GM10248 (cell line): ENCODE measurements at regions of chr15 and their contacts with region 1.

Region 1: GRCh38 chr15:77633134-77633912 is 611 bp upstream of the LINGO1 start:
- DNase-seq: peak; percentile 93
- CTCF ChIP-seq: peak; percentile 100

Region 2: DNA sequence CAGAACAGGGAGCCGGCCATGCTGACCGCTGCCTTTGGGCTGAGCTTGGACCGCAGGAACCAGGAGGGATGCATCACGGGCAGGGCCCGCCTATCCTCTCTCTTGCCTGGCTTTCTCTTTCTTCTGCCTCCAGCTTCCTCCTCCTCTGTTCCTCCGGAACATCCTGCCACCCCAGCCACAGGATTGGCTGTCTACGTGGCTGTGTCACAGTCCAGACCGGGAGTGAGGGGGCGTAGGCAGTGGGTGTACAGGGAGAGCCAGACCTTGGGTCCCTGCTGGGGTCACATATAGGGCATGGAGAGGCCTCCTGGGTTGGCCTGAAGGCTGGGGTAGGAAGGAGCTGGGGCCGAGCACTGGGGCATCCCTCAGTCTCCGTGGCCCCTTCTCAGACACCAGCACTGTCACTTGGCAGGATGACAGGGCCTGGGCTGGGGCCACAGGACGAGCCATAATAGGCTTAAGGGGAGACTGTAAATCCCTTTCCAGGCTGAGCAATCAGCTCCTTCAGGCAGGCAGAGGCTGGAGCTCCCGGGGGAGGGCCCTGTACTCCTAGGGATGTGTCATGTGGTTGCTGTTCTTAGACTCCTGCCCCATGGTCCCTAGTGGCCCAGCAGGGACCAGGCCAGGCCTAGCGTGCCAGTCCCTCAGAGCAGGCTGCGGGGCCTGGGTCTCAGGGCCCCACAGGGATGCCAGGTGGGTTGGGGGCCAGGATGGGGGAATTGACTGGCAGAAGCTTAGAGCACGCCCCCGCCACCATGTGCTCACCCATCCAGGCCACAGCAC is 26.0 kb before region 1 on chr15:
- CTCF ChIA-PET with region 1: interaction called, 25 read pairs
- POLR2A ChIA-PET with region 1: no interaction called
- DNase-seq: no peak
- CTCF ChIP-seq: no peak

Region 3: DNA sequence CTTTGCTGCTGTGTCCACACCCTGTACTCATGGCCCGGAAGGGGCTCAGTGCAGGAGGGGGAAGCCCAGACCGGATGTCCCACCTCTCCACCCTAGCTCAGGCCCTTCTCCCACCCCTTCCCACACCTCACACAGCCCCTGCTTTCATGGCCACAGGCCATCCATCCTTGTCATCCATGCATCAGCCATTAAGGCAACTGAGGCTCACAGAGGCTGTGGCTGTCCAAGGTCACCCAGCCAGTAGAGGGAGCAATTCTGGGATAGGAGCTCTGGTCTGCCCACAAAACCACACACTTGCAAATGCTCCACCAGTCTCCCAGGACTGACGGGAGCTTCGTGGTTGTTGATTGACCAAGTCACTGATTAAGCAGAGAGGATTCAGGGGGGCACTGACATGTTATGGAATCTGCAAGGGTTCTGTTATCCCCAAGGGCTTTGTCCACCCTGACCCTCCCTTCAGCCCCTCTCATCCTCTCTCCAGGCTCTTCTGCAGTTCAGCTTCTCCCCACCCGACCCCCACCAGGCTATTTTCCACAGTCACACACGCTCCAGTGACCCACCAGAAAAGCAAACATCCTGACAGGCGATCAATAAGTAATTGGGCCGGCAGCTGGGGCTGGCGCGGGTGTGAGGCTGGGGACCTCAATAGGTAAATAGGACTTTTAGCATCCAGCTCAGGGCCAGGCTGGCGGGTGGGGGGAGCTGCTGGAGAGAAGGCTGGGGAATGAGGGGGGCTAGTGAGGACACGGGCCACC is 15.7 kb before region 1 on chr15:
- CTCF ChIA-PET with region 1: interaction called, 10 read pairs
- POLR2A ChIA-PET with region 1: no interaction called
- DNase-seq: no peak
- CTCF ChIP-seq: peak; percentile 38

Region 4: GRCh38 chr15:77622934-77623753 is 10.2 kb before region 1 on chr15:
- CTCF ChIA-PET with region 1: interaction called, 14 read pairs
- POLR2A ChIA-PET with region 1: no interaction called
- DNase-seq: no peak
- CTCF ChIP-seq: no peak

Region 5: DNA sequence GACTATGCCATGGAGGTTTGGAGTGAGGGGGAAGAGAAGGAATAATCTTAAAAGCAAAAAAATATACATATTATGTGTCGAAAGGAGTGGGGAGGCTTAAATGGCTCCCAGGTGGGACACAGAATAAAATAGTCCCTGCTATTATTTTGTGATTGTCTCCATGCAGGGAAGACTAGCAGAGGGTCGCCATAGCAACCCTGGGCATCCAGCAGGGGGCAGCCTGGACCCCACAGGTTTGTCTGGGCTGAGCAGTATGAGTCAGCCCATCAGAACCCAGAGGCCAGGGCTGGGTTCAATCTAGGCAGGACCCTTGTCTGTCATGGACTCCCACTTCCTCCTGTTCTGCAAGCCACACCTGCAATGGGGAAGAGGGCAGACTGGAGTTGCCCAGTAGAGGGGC is 16.9 kb after region 1 on chr15:
- CTCF ChIA-PET with region 1: interaction called, 74 read pairs
- POLR2A ChIA-PET with region 1: no interaction called
- DNase-seq: no peak
- CTCF ChIP-seq: peak; percentile 11

Region 6: DNA sequence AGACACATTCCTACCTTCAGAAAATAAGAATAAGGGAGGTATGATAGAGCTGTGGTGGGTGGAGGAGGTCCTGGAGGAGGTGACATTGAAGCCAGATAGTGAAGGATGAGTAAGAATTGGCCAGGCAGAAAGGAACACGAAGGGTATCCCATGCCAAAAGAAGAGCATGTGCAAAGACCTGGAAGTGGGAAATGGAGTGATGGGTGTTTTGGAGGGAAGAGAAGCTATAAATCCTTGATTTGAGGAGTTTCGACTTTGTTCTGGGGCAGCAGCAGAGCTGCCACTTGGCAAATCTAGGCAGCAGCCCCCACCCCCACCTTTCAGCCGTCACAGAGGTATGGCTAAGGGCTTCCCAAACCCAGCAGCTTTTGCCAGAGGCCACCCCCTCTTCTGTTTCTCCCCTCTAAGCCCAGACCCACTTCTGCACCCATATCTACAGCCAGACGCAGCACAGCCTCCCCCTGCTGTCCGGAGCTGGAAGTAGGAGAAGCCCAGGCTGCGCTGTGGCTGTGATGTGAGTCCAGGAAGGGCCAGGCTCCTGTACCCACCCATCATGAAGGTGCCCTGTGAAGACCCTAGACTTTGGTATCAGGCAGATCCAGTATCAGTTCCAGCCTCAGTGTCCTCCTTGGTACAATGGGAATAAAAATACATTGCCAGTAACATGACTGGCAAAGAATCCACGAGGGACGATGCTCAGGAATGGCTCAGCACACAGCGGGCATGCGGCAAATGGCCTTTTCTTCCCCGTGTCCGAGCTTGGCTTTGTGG is 188.1 kb after region 1 on chr15:
- CTCF ChIA-PET with region 1: interaction called, 56 read pairs
- POLR2A ChIA-PET with region 1: no interaction called
- DNase-seq: peak; percentile 68
- CTCF ChIP-seq: peak; percentile 85

Region 7: GRCh38 chr15:77874063-77874462 is 240.7 kb after region 1 on chr15:
- CTCF ChIA-PET with region 1: interaction called, 13 read pairs
- POLR2A ChIA-PET with region 1: no interaction called
- DNase-seq: no peak
- CTCF ChIP-seq: no peak

Region 8: GRCh38 chr15:77889009-77889806 is 255.9 kb after region 1 on chr15:
- CTCF ChIA-PET with region 1: no interaction called
- POLR2A ChIA-PET with region 1: no interaction called
- DNase-seq: no peak
- CTCF ChIP-seq: no peak